Aorta (tissue), 5 donors: ENCODE measurements at regions of chr9 and their contacts with region 1.

Region 1: GRCh38 chr9:133485361-133486260 is 6.7 kb upstream of the SLC2A6 start:
- DNase-seq: peak; percentile 35 to 65
- ATAC-seq: peak; percentile 31
- H3K4me3 ChIP-seq: no peak overlapping the region
- H3K27ac ChIP-seq: no peak overlapping the region
- H3K4me1 ChIP-seq: no peaks in the 10 kb centered on the region
- H3K27me3 ChIP-seq: no peaks in the 10 kb centered on the region

Region 2: DNA sequence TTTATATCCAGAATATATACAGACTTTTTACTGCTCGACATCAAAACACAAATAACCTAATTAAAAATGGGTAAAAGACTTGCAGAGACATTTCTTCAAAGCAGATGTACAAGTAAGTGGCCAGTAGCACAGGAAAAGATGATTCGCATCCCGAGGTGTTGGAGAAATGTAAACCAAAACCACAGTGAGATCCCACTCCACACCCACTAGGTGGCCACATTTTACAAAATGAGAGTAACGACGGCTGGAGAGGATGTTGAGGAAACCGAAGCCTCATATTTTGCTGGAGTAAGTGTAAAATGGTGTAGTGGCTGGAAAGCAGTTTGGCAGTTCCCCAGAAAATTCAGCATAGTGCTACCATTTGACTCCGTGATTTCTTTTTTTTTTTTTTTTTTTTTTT is 300.6 kb before region 1 on chr9:
- intact Hi-C with region 1: loop called (anchors 2 to 5 kb)
- DNase-seq: no peak
- ATAC-seq: peak; percentile 57
- H3K4me3 ChIP-seq: no peak overlapping the region
- H3K27ac ChIP-seq: no peak overlapping the region
- H3K4me1 ChIP-seq: no peaks in the 10 kb centered on the region
- H3K27me3 ChIP-seq: no peaks in the 10 kb centered on the region

Region 3: GRCh38 chr9:133406480-133407307 is 78.9 kb before region 1 on chr9:
- intact Hi-C with region 1: loop called (anchors 1 to 2 kb)
- DNase-seq: peak; percentile 78 to 92
- ATAC-seq: peak; percentile 81
- H3K4me3 ChIP-seq: no peak overlapping the region
- H3K27ac ChIP-seq: no peak overlapping the region
- H3K4me1 ChIP-seq: no peaks in the 10 kb centered on the region
- H3K27me3 ChIP-seq: no peaks in the 10 kb centered on the region

Region 4: DNA sequence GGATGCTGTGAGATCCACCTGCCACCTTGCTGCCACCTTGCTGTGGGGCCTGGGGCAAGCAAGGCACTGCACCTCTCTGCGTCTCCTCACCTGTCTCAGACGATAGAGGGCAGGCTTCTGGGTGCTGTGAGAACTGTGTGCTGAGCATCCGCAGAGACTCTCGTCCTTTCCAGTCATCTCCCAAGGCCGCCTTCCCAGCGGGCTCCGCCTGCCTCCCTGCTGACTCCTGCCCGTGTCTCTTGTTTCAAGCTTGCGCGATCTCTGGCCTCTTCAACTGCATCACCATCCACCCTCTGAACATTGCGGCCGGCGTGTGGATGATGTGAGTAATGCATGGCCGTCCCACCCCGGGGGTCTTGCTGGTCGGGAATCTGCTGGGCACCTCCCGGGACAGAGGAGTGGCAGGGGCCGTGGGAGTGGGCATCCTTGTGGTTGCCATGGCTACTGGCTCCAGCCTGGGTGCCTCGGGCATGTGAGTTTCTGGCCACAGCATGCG is 22.3 kb before region 1 on chr9:
- intact Hi-C with region 1: no loop called
- DNase-seq: no peak
- ATAC-seq: no peak
- H3K4me3 ChIP-seq: no peak overlapping the region
- H3K27ac ChIP-seq: no peak overlapping the region
- H3K4me1 ChIP-seq: no peaks in the 10 kb centered on the region
- H3K27me3 ChIP-seq: no peaks in the 10 kb centered on the region